ENCODE measurements at regions of chr9 and their contacts with region 1.

Region 1: GRCh38 chr9:135085830-135086546 is 1.5 kb upstream of the OLFM1 start:
- DNase-seq: peak; percentile 65
- CTCF ChIP-seq: peak; percentile 68

Region 2: DNA sequence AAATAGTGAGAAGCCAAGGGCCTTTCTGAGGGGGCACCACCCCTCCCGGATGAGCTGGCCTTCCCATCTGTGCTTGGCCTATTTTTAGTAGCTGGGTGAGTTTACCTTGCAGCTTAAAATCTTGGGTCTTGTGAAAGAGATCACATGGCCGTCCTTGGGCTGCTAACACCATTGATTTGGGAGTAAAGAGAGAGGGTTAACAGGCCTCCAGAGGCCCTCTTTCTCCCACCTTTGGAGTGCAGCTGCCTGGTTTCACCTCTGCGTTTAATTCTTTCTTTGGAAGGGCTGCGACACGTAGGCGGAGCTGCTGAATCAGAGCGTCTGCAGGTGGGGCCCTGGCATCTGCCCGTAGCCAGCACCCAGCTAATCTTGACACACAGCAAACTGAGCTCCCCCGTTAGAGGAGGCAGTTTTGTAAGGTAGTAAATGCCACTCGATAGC is 14.3 kb after region 1 on chr9:
- CTCF ChIA-PET with region 1: no interaction called
- POLR2A ChIA-PET with region 1: no interaction called
- DNase-seq: no peak
- CTCF ChIP-seq: no peak

Region 3: GRCh38 chr9:135410831-135411473 is 325.0 kb after region 1 on chr9:
- CTCF ChIA-PET with region 1: interaction called, 14 read pairs
- POLR2A ChIA-PET with region 1: no interaction called
- DNase-seq: no peak
- CTCF ChIP-seq: no peak

Measured in GM10248 (cell line).